Cardiac septum (tissue), 1 donor: ENCODE measurements at regions of chr3 and their contacts with region 1.

Region 1: DNA sequence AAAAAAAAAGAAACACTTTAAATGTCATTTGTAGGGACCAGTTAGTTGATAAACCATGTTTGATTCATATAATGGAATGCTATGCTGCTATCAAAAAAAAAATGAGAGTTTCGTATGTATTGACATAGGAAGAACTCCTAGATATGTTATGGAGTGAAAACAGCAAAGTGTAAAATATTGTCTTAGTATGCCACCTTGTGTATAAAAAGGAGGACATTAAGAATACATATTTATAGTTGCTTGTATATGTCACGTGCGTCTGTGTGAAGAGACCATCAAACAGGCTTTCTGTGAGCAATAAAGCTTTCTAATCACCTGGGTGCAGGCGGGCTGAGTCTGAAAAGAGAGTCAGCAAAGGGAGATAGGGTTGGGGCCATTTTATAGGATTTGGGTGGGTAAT is 39.5 kb downstream of the KBTBD8 start:
- DNase-seq: no peak

Region 2: DNA sequence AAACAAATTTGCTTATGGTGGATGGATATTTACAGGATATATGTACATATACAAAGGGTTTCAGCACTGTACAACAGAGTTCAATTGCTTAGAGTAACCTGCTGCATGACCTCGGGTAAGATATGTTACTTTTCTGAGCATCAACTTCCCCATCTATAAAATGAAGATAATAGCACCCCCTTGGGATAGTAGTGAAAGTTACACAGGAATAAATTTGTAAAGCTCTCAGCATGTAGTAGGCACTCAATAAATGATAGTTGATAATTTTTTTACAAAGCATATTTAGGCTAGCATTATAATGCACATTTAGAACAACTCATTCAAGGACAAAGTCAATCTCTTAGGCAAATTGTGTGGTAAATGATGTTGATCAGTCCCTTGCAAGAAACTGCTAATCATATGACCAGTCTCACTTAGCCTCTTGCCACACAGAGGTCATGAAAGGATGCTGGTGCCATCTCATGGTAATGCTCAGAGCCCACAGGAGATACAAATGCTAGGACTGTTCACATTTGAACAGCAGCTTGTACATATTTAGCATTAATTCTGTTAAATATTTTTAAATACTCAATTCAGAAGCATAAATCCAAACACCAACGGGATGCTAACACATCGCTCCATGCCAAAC is 1122.8 kb before region 1 on chr3:
- intact Hi-C with region 1: no loop called
- DNase-seq: no peak

Region 3: GRCh38 chr3:66253790-66254620 is 783.6 kb before region 1 on chr3:
- intact Hi-C with region 1: loop called (anchors 5 kb)
- DNase-seq: no peak

Region 4: GRCh38 chr3:66971891-66972551 is 65.6 kb before region 1 on chr3:
- intact Hi-C with region 1: loop called (anchors 5 kb)
- DNase-seq: peak; percentile 81